ENCODE measurements at regions of chr9 and their contacts with region 1.

Region 1: DNA sequence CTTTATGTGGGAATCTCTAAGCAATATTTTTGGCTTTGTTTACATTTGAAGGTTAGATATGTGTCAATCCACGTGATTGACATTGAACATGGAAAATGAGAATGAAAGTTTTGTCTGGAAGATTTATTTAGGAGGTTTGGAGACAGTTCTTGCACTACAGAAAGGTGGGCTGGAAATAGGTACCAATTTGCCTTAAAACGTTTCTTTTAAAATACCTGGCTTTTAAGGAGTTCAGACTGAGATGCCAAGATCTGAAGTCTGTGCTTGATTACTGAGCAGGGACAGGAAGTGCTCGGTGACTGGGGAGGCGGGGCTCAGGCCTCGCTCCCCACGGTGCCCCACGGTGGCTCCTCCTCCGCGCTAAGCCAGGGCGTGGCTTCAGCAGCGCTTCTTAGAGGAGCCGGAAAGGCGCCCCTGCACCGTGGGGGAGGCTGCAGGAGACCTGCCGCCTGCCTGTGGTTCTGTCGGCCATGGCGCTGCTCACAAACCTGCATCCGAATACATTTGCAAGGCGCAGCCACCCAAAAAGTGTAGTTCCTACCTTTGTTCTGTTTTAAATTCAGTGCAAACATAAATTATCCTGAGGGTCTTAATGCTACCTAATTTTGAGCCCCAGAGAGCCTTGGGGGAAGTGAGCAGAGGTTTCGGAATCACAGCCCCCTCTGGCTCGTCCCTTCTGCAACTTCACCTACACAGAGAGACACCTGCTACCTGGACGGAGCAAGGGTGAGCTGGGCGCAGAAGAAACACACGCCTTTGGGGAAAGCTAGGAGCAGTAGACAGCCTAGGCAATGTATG is 49.2 kb downstream of the USP20 start:
- DNase-seq: peak; percentile 92
- ATAC-seq: peak; percentile 86

Region 2: GRCh38 chr9:129910628-129911567 is 26.5 kb after region 1 on chr9:
- intact Hi-C with region 1: no loop called
- DNase-seq: no peak
- ATAC-seq: peak; percentile 94

Region 3: GRCh38 chr9:130053504-130054324 is 169.3 kb after region 1 on chr9 and contains the start of gene GPR107:
- intact Hi-C with region 1: loop called (anchors 10 kb)
- DNase-seq: peak; percentile 89
- ATAC-seq: peak; percentile 98
- total RNA-seq, gene GPR107: 42.4 TPM

Region 4: GRCh38 chr9:130107234-130107861 is 222.9 kb after region 1 on chr9:
- intact Hi-C with region 1: loop called (anchors 5 kb)
- DNase-seq: peak; percentile 95
- ATAC-seq: peak; percentile 91

Region 5: GRCh38 chr9:130235897-130236668 is 351.7 kb after region 1 on chr9:
- intact Hi-C with region 1: loop called (anchors 10 kb)
- DNase-seq: peak; percentile 81
- ATAC-seq: peak; percentile 69

Region 6: DNA sequence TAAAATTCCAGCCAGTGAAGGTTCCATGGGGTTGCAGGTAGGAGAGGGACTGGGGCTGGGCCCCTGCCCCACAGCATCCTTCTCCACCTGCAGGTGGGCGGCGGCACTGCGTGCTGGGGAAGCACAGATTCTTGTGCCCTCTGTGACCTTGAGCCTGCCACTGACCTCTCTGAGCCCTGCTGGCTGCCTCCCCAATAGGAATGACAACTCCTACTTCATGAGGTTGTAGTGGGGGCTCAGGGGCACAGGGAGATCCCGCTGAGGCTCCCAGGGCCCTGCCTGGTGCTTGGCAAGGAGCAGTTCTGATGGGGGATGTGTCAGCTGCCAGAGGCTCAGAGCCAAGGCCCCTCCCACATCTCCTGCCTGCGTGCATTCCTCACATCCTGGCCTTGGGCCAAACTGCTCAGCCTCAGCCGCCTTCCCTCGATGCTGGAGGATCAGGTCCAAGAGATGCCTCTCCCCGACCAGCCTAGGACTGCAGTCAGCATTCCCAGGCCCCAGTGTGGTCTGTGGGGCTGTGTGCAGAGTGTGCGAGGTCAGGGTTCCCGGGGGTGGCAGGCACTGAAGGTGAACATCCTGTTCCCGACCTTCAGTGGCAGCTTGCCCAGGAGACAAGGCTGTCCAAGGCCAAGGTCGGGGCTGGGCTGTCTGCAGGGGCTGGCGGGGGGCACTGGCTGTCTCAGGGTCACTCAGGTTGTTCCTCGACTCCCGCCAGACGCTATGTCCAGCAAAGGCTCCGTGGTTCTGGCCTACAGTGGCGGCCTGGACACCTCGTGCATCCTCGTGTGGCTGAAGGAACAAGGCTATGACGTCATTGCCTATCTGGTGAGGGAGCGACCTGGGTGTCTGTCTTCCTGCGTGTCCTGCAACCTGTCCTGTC is 567.3 kb after region 1 on chr9:
- intact Hi-C with region 1: no loop called
- DNase-seq: peak; percentile 90
- ATAC-seq: peak; percentile 92